Common myeloid progenitor, CD34-positive (primary cell): ENCODE measurements at regions of chr3 and their contacts with region 1.

Region 1: GRCh38 chr3:111668912-111669488 is 73.9 kb upstream of the ZBED2 start:
- DNase-seq: peak; percentile 53 to 64 (median 62)
- H3K4me3 ChIP-seq: no peak overlapping the region
- H3K27ac ChIP-seq: no peak overlapping the region
- H3K4me1 ChIP-seq: peaks cover 12 to 44% (median 29%) of the 10 kb centered on the region in 4 experiments
- H3K27me3 ChIP-seq: no peaks in the 10 kb centered on the region

Region 2: GRCh38 chr3:111577794-111578685 is 91.0 kb before region 1 on chr3:
- CTCF ChIA-PET with region 1: interaction called, 28 read pairs
- POLR2A ChIA-PET with region 1: no interaction called
- DNase-seq: peak; percentile 71 to 83 (median 80)
- H3K4me3 ChIP-seq: no peak overlapping the region
- H3K27ac ChIP-seq: no peak overlapping the region
- H3K4me1 ChIP-seq: peaks cover 0 to 23% (median 3%) of the 10 kb centered on the region in 4 experiments
- H3K27me3 ChIP-seq: no peaks in the 10 kb centered on the region

Region 3: GRCh38 chr3:111604119-111604518 is 64.9 kb before region 1 on chr3:
- CTCF ChIA-PET with region 1: no interaction called
- POLR2A ChIA-PET with region 1: no interaction called
- DNase-seq: no peak
- H3K4me3 ChIP-seq: no peak overlapping the region
- H3K27ac ChIP-seq: no peak overlapping the region
- H3K4me1 ChIP-seq: peaks cover 0 to 2% (median 0%) of the 10 kb centered on the region in 4 experiments
- H3K27me3 ChIP-seq: no peaks in the 10 kb centered on the region

Region 4: DNA sequence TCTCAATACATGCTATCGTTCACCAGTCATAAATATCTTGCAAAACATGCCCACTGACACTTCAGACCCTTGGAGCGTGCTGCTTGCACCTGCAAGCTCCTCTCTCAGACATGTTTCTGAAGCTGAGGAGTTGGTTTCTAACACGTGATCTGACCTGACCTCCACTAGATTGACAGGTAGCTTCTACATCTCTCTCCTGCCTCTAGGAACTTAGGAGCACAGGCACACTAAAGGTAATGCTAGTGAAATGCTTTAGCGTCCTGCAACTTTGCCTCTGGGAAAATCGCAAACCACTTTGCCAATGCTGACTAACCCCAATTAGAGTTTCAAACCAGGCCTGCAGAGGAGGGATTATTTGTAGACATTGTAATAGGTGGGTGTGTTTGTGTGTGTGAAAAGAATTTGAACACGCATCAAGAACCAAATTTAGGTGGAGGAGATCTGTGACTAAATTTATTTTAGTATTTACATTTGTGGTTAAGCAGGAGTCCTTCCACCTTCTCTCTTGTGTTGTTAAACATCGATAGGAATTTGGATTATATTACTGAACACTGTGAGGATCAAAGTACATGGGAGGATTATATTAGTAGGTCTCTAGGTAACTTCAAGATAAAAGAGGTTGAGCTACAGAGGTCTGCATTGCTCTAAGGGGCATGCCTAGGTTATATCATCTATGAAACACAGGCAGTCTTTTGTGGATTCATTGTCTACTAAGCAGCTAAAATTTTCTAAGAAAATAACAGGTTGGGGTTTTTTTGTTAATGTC is 12.8 kb after region 1 on chr3:
- CTCF ChIA-PET with region 1: interaction called, 62 read pairs
- POLR2A ChIA-PET with region 1: no interaction called
- DNase-seq: no peak
- H3K4me3 ChIP-seq: no peak overlapping the region
- H3K27ac ChIP-seq: no peak overlapping the region
- H3K4me1 ChIP-seq: peaks cover 0 to 8% (median 6%) of the 10 kb centered on the region in 4 experiments
- H3K27me3 ChIP-seq: no peaks in the 10 kb centered on the region

Region 5: DNA sequence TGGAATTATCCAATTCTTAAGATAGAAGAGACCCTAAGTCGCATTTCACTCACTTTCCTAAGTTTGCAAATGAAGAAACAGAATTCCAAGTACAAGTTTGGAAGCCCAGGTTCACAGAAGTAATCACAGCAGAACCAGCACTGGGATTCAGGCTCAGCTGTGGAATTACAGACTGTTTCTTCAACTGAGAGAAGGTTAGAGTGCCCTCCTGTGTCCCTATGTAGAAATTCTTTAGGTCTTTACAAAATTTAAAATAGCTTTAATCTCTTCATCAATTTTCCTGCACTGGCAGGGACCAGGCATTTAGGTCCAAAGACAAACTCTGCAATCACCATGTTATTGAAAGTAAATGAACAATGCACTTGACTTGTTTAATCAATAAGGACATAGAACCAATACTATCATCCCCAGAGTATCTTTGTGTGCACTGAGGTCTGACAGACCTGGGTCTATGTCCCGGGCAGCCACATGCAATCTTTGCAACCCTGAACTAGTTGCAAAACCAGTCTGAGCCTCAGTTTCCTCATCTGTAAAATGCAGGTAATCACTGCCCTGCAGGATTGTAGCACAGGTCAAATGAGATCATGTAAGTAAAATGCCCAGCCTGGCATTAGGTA is 22.4 kb after region 1 on chr3:
- CTCF ChIA-PET with region 1: interaction called, 62 read pairs
- POLR2A ChIA-PET with region 1: no interaction called
- DNase-seq: peak; percentile 60 to 72 (median 67)
- H3K4me3 ChIP-seq: no peak overlapping the region
- H3K27ac ChIP-seq: no peak overlapping the region
- H3K4me1 ChIP-seq: peaks cover 0 to 19% (median 3%) of the 10 kb centered on the region in 4 experiments
- H3K27me3 ChIP-seq: no peaks in the 10 kb centered on the region